ENCODE measurements at regions of chr4 and their contacts with region 1.

Region 1: GRCh38 chr4:163554870-163555465 is 60.5 kb downstream of the TMA16 start:
- DNase-seq: no peak
- ATAC-seq: no peak
- H3K4me3 Mint-ChIP-seq: no peak overlapping the region
- H3K27ac Mint-ChIP-seq: peak overlapping the region; percentile 84
- H3K4me1 Mint-ChIP-seq: peaks cover 85% of the 10 kb centered on the region
- H3K27me3 Mint-ChIP-seq: no peaks in the 10 kb centered on the region
- CTCF ChIP-seq: peak; percentile 61

Region 2: DNA sequence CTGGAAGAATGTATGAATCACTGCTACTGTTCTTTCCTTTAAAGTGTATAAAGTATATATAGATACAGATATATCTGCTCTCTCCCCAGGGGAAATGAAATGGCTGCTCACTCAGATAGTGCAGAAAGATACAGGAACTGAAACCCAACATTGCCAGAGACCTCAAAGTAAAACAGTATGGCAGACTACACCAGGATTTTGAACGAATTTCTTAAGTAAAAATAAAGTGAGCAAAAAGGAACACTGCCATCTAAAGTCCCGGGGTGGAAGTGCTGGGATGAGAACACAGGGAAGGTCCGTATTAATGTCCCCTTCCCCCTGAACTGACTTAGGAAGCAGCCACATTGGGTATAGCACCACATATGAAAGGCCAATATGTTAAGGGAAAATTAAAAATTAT is 32.9 kb after region 1 on chr4:
- CTCF ChIA-PET with region 1: interaction called, 33 read pairs
- POLR2A ChIA-PET with region 1: interaction called, 38 read pairs
- intact Hi-C with region 1: loop called (anchors 1 kb)
- DNase-seq: peak; percentile 34
- ATAC-seq: peak; percentile 77
- H3K4me3 Mint-ChIP-seq: peak overlapping the region; percentile 65
- H3K27ac Mint-ChIP-seq: peak overlapping the region; percentile 92
- H3K4me1 Mint-ChIP-seq: peaks cover 79% of the 10 kb centered on the region
- H3K27me3 Mint-ChIP-seq: no peaks in the 10 kb centered on the region
- CTCF ChIP-seq: no peak

Region 3: DNA sequence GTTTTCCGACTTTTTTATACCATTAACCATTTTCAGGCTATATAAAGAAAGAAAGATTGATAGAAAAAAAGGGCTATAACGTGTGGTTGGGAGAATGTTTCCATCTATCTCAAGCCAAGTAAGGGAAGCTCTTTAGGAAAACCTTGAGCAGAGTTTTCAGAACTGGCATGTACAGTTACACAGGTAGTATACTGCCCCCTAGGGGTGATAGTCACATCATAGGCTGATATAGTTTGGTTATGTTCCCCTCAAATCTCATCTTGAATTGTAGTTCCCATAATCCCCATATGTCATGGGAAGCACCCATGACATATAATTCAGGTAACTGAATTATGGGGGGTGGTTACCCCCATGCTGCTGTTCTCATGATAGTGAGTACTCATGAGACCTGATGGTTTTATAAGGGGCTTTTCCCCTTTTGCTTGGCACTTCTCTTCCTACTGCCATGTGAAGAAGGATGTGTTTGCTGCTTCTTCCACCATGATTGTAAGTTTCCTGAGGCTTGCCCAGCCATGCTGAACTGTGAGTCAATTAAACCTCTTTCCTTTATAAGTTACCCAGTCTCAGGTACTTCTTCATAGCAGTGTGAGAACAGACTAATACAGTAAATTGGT is 126.3 kb after region 1 on chr4:
- CTCF ChIA-PET with region 1: interaction called, 767 read pairs
- POLR2A ChIA-PET with region 1: interaction called, 48 read pairs
- intact Hi-C with region 1: loop called (anchors 1 kb)
- DNase-seq: no peak
- ATAC-seq: peak; percentile 81
- H3K4me3 Mint-ChIP-seq: no peak overlapping the region
- H3K27ac Mint-ChIP-seq: peak overlapping the region; percentile 25
- H3K4me1 Mint-ChIP-seq: peaks cover 19% of the 10 kb centered on the region
- H3K27me3 Mint-ChIP-seq: peaks cover 3% of the 10 kb centered on the region
- CTCF ChIP-seq: no peak

Region 4: DNA sequence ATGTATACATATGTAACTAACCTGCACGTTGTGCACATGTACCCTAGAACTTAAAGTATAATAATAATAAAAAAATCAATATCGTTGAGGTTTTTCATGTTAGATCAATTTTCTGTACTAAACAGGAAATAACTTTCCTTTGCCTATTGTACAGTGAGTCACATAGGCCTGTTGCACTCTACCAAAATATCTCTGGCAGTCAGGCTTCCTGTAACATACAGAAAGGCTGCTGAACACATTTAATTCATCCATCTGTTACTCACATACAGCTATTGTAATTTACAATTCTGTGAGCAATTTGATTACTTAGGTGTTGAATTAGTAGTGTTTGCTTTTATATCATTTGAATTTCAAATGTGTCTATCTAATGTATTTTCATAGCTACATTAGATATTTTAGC is 367.3 kb after region 1 on chr4:
- CTCF ChIA-PET with region 1: no interaction called
- POLR2A ChIA-PET with region 1: no interaction called
- intact Hi-C with region 1: loop called (anchors 10 kb)
- DNase-seq: no peak
- ATAC-seq: no peak
- H3K4me3 Mint-ChIP-seq: no peak overlapping the region
- H3K27ac Mint-ChIP-seq: no peak overlapping the region
- H3K4me1 Mint-ChIP-seq: no peaks in the 10 kb centered on the region
- H3K27me3 Mint-ChIP-seq: no peaks in the 10 kb centered on the region
- CTCF ChIP-seq: no peak

Region 5: GRCh38 chr4:164731827-164732474 is 1177.0 kb after region 1 on chr4:
- CTCF ChIA-PET with region 1: interaction called, 30 read pairs
- POLR2A ChIA-PET with region 1: no interaction called
- intact Hi-C with region 1: loop called (anchors 1 kb)
- DNase-seq: peak; percentile 15
- ATAC-seq: peak; percentile 54
- H3K4me3 Mint-ChIP-seq: no peak overlapping the region
- H3K27ac Mint-ChIP-seq: no peak overlapping the region
- H3K4me1 Mint-ChIP-seq: no peaks in the 10 kb centered on the region
- H3K27me3 Mint-ChIP-seq: no peaks in the 10 kb centered on the region
- CTCF ChIP-seq: peak; percentile 89

Region 6: GRCh38 chr4:165070560-165070959 is 1515.6 kb after region 1 on chr4:
- CTCF ChIA-PET with region 1: no interaction called
- POLR2A ChIA-PET with region 1: no interaction called
- intact Hi-C with region 1: no loop called
- DNase-seq: no peak
- ATAC-seq: no peak
- H3K4me3 Mint-ChIP-seq: no peak overlapping the region
- H3K27ac Mint-ChIP-seq: no peak overlapping the region
- H3K4me1 Mint-ChIP-seq: no peaks in the 10 kb centered on the region
- H3K27me3 Mint-ChIP-seq: no peaks in the 10 kb centered on the region
- CTCF ChIP-seq: no peak